Left colon (tissue), 2 donors: ENCODE measurements at regions of chr10 and their contacts with region 1.

Region 1: GRCh38 chr10:102743588-102744373 is at the start of gene WBP1L:
- DNase-seq: peak; percentile 97 to 99
- ATAC-seq: peak; percentile 97
- total RNA-seq, gene WBP1L: 37.8 to 47.8 TPM

Region 2: GRCh38 chr10:102432162-102432950 is 311.4 kb before region 1 on chr10 and contains the start of gene CUEDC2:
- intact Hi-C with region 1: no loop called
- DNase-seq: peak; percentile 97
- ATAC-seq: peak; percentile 97
- total RNA-seq, gene CUEDC2: 25.4 to 27.8 TPM

Region 3: DNA sequence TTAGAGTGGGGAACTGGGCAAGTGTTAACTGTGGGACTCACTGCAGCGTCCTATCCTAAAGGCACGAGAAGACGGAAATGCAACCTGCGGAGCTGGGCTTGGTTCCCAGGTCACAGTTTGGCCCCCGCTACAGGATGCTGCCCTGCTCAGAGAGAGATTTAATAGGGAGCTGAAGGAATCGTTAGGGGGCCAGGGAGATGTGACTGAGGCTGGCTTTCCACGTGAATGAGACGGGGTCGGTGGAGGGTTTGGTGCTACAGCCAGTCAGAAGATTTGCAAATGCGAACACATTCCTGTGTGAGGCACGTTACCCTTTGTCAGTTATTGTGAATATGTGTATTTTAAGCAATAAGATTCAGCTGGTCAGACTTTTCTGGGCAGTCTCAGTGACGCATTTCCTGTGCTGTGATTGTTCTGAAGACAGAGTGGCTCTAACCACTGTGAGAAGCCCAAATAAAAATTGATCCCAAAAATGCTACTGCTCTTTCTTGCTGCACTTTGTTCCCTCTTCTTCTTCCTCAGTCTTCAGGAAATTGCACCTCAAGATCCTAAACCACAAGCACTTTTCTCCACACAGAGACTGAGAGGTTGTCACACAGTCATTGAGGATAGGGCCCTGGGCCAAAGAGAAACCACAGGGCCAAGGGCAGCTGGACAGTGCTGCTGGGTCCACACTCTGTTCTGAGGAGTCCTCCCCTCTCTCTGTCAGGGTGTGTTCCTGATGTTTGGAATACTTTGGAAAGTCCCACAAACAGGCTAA is 72.2 kb after region 1 on chr10:
- intact Hi-C with region 1: loop called in 1 of 2 experiments (anchors 5 kb)
- DNase-seq: peak in 1 of 2 donors; percentile 30
- ATAC-seq: no peak

Region 4: GRCh38 chr10:102826148-102826796 is 82.5 kb after region 1 on chr10:
- intact Hi-C with region 1: no loop called
- DNase-seq: no peak
- ATAC-seq: no peak

Region 5: GRCh38 chr10:103739039-103739764 is 995.4 kb after region 1 on chr10:
- intact Hi-C with region 1: no loop called
- DNase-seq: no peak
- ATAC-seq: peak; percentile 11